GM12878 (cell line): ENCODE measurements at regions of chr16 and their contacts with region 1.

Region 1: GRCh38 chr16:57115514-57116182 is 23.3 kb downstream of the CPNE2 start:
- DNase-seq: no peak
- ATAC-seq: no peak
- H3K4me3 ChIP-seq: no peak overlapping the region
- H3K27ac ChIP-seq: no peak overlapping the region
- H3K4me1 ChIP-seq: peaks cover 24% of the 10 kb centered on the region
- H3K27me3 ChIP-seq: no peaks in the 10 kb centered on the region
- CTCF ChIP-seq: no peak
- EP300 ChIP-seq: no peak
- POLR2A ChIP-seq: no peak
- RAD21 ChIP-seq: no peak

Region 2: DNA sequence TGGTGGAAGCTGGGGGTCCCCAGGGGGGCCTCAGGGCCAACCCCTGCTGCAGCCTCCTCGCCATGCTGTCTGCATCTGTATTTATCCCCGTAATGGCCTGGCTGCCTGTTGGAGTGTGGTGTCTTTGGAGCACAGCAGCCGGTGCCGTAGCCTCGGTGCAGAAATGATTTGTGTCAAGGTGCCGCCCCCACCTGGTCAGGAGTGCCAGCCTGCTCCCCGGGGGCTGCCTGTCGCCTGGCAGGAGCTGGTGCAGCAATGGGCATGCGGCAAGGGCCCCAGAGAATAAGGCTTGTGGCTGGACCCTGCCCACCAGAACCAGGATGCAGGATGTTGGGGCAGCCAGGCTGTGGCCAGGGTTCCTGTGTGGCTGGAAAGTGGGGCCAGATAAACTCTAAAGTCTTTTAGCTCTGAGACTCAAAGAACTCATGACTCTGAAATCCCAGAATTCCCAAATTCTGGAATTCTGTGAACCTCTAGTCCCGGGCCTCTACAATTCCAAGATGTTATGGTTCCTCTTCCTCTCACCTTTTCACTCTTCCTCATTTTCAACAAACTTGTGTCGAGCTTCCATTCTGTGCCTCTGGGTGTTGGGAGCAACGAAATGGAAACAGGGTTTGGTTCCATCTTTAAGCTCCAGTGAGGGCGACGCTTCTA is 17.3 kb before region 1 on chr16:
- CTCF ChIA-PET with region 1: interaction called, 15 read pairs
- POLR2A ChIA-PET with region 1: interaction called, 3 read pairs
- RAD21 ChIA-PET with region 1: interaction called, 10 read pairs
- SMC1A ChIA-PET with region 1: interaction called, 4 read pairs
- in situ Hi-C with region 1: no loop called
- intact Hi-C with region 1: no loop called
- DNase-seq: no peak
- ATAC-seq: no peak
- H3K4me3 ChIP-seq: no peak overlapping the region
- H3K27ac ChIP-seq: no peak overlapping the region
- H3K4me1 ChIP-seq: no peaks in the 10 kb centered on the region; the same call in 1 of the 2 replicates
- H3K27me3 ChIP-seq: no peaks in the 10 kb centered on the region; a peak in 2 of 4 replicates
- CTCF ChIP-seq: no peak
- EP300 ChIP-seq: no peak
- POLR2A ChIP-seq: no peak
- RAD21 ChIP-seq: no peak

Region 3: DNA sequence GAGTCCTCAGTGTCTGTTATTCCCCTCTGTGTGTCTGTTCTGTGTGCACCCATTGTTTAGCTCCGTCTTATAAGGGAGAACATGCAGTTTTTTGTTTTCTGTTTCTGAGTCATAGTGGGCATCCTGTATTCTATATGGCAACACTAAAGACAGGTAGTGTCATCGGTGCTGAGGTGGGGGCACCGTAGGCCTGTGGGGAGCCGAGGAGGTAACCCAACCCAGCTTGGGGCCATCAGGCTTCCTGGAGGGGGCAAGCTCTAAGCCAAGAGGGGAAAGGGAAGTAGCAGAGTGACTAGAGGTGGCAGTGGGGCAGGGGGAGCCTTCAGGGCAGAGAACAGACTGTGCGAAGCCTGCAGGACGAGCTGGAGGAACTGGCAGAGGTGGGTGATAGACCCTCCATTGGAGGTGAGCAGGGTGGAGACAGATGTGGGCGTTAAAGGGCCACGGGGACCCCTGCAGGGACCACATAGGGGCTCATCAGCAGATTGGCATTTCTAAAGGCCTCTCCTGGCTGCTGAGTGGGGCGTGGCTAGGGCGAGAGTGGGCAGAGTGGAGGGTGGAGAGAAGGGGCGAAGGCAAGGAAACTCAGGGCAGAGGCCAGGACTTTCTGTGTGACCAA is 13.2 kb after region 1 on chr16:
- CTCF ChIA-PET with region 1: interaction called, 5 read pairs
- POLR2A ChIA-PET with region 1: interaction called, 3 read pairs
- RAD21 ChIA-PET with region 1: interaction called, 4 read pairs
- SMC1A ChIA-PET with region 1: interaction called, 10 read pairs
- in situ Hi-C with region 1: no loop called
- intact Hi-C with region 1: no loop called
- DNase-seq: peak; percentile 28
- ATAC-seq: peak; percentile 75
- H3K4me3 ChIP-seq: no peak overlapping the region
- H3K27ac ChIP-seq: no peak overlapping the region
- H3K4me1 ChIP-seq: peaks cover 31% of the 10 kb centered on the region
- H3K27me3 ChIP-seq: no peaks in the 10 kb centered on the region
- CTCF ChIP-seq: no peak
- EP300 ChIP-seq: no peak
- POLR2A ChIP-seq: no peak
- RAD21 ChIP-seq: no peak

Region 4: GRCh38 chr16:57304169-57305061 is 188.8 kb after region 1 on chr16:
- CTCF ChIA-PET with region 1: no interaction called
- POLR2A ChIA-PET with region 1: no interaction called
- RAD21 ChIA-PET with region 1: no interaction called
- SMC1A ChIA-PET with region 1: no interaction called
- in situ Hi-C with region 1: no loop called
- intact Hi-C with region 1: no loop called
- DNase-seq: peak; percentile 40
- ATAC-seq: peak; percentile 24
- H3K4me3 ChIP-seq: no peak overlapping the region
- H3K27ac ChIP-seq: peak overlapping the region; percentile 27
- H3K4me1 ChIP-seq: peaks cover 18% of the 10 kb centered on the region
- H3K27me3 ChIP-seq: no peaks in the 10 kb centered on the region
- CTCF ChIP-seq: no peak
- EP300 ChIP-seq: peak in 1 of 2 experiments; percentile 36; a peak in 1 of 4 replicates
- POLR2A ChIP-seq: no peak
- RAD21 ChIP-seq: no peak